ENCODE measurements at regions of chr6 and their contacts with region 1.

Region 1: DNA sequence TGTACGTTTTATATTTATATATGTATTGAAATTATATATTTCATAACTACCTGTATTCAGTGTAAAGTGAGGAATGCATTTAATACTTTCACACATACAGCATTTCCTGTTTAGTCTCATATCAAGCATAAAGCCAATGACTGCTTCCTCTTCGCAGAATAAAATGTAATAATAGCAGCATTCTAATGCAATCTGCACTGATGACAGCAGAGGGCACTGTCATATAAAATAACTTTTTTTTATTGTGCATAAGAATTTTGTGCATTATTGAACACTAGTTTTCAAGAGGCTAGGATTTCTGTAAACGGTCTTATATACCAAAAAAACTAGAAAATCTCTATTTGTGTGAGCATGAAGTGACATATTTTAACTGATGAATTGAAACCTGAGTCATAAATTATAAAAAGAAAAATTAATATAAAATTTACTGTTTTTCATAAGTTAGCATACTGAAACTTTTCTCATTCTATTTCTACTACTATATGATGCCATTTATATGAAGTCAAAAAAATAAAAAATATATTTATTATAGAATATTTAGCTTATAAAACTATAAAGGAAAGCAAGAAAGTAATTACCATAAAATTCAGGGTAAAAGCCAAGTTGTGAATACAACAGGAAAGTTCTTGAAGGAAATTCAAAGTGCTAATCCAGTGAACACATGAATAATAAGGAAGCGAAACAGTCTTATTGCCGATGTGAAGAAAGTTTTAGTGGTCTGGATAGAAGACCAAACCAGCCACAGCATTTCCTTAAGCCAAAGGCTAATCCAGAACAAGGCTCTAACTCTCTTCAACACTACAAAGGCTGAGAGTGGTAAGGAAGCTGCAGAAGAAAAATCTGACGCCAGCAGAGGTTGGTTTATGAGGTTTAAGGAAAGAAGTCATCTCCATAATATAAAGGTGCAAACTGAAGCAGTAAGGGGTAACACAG is 36.3 kb downstream of the RNF146 start:
- DNase-seq: peak; percentile 20 to 44
- ATAC-seq: peak in 1 of 2 experiments; percentile 34; a peak in 1 of 6 replicates
- H3K4me3 ChIP-seq: no peak overlapping the region
- H3K27ac ChIP-seq: no peak overlapping the region
- H3K4me1 ChIP-seq: no peaks in the 10 kb centered on the region
- CTCF ChIP-seq: peak; percentile 74
- EP300 ChIP-seq: no peak
- POLR2A ChIP-seq: no peak
- RAD21 ChIP-seq: peak; percentile 72 to 76

Region 2: GRCh38 chr6:127420556-127420955 is 117.6 kb after region 1 on chr6:
- CTCF ChIA-PET with region 1: interaction called, 16 read pairs
- POLR2A ChIA-PET with region 1: no interaction called
- DNase-seq: peak; percentile 71 to 84
- ATAC-seq: peak; percentile 100
- H3K4me3 ChIP-seq: no peak overlapping the region
- H3K27ac ChIP-seq: peak overlapping the region; percentile 36 to 38; a peak in 4 of 6 replicates
- H3K4me1 ChIP-seq: peaks cover 14% of the 10 kb centered on the region
- CTCF ChIP-seq: peak; percentile 56
- EP300 ChIP-seq: no peak
- POLR2A ChIP-seq: no peak
- RAD21 ChIP-seq: peak; percentile 65 to 72

Measured in A549 (cell line).